Activated naive CD4-positive, alpha-beta T cell treated with anti-CD3 and anti-CD28 coated beads for 36 hours (primary cell): ENCODE measurements at regions of chr4 and their contacts with region 1.

Region 1: GRCh38 chr4:6873792-6874461 is 35.7 kb upstream of the TBC1D14 start:
- DNase-seq: peak; percentile 91
- H3K4me3 Mint-ChIP-seq: no peak overlapping the region
- H3K27ac Mint-ChIP-seq: no peak overlapping the region
- H3K4me1 Mint-ChIP-seq: peaks cover 2% of the 10 kb centered on the region
- H3K27me3 Mint-ChIP-seq: no peaks in the 10 kb centered on the region

Region 2: GRCh38 chr4:6574747-6575502 is 299.0 kb before region 1 on chr4 and contains the start of gene MAN2B2:
- CTCF ChIA-PET with region 1: no interaction called
- intact Hi-C with region 1: loop called (anchors 10 kb)
- DNase-seq: peak; percentile 83
- H3K4me3 Mint-ChIP-seq: peak within 1 kb of the TSS; percentile 84
- H3K27ac Mint-ChIP-seq: peak within 1 kb of the TSS; percentile 60
- H3K4me1 Mint-ChIP-seq: peaks cover 4% of the 10 kb centered on the region
- H3K27me3 Mint-ChIP-seq: no peaks in the 10 kb centered on the region
- total RNA-seq, gene MAN2B2: 12.7 to 12.8 TPM

Region 3: DNA sequence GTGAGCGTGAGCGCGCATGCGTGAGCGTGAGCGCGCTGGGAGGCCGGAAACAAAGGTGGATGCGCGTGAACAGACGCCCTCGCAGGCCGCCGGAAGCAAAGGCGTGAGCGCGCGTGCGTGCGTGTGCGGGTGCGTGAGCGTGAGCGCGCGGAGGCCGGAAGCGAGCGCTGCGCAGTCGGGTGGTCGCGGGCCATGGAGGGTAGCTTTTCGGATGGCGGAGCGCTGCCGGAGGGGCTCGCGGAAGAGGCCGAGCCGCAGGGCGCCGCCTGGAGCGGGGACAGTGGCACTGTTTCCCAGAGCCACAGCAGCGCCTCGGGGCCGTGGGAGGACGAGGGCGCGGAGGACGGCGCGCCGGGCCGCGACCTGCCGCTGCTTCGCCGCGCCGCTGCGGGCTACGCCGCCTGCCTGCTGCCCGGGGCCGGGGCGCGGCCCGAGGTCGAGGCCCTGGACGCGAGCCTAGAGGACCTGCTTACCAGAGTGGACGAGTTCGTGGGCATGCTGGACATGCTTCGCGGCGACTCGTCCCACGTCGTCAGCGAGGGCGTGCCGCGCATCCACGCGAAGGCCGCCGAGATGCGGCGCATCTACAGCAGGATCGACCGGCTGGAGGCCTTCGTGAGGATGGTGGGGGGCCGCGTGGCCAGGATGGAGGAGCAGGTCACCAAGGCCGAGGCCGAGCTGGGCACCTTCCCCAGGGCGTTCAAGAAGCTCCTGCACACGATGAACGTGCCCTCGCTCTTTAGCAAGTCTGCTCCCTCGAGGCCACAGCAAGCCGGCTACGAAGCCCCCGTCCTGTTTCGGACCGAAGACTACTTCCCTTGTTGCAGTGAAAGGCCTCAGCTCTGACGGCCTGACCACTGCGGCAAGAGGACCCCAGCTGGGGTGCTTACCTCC is 157.7 kb before region 1 on chr4 and contains the start of gene BLOC1S4:
- CTCF ChIA-PET with region 1: interaction called, 179 read pairs
- intact Hi-C with region 1: loop called (anchors 1 kb)
- DNase-seq: peak; percentile 88
- H3K4me3 Mint-ChIP-seq: peak within 1 kb of the TSS; percentile 96
- H3K27ac Mint-ChIP-seq: peak within 1 kb of the TSS; percentile 95
- H3K4me1 Mint-ChIP-seq: peaks cover 26% of the 10 kb centered on the region
- H3K27me3 Mint-ChIP-seq: no peaks in the 10 kb centered on the region
- total RNA-seq, gene BLOC1S4: 11.0 to 11.8 TPM

Region 4: DNA sequence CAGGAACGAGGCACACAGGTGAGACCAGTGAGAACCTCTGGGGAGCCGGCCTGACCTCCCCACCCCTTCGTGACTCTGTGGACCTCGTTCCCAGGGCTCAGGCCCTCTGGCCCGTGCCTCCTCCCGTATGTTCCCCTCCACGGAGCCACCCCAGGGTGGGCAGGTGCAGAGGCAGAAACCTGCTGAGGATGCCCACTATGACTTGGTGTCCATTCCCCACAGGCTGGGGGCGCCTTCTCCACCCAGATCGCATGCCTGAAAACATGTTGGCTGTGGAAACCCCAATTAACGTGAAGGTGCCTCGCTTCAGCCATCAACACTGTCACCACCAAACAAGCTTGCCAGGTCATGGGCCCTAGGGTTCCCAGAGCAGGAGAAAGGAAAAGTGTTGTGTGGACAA is 130.9 kb before region 1 on chr4:
- CTCF ChIA-PET with region 1: interaction called, 5 read pairs
- intact Hi-C with region 1: loop called (anchors 1 kb)
- DNase-seq: no peak
- H3K4me3 Mint-ChIP-seq: no peak overlapping the region
- H3K27ac Mint-ChIP-seq: no peak overlapping the region
- H3K4me1 Mint-ChIP-seq: peaks cover 7% of the 10 kb centered on the region
- H3K27me3 Mint-ChIP-seq: no peaks in the 10 kb centered on the region

Region 5: DNA sequence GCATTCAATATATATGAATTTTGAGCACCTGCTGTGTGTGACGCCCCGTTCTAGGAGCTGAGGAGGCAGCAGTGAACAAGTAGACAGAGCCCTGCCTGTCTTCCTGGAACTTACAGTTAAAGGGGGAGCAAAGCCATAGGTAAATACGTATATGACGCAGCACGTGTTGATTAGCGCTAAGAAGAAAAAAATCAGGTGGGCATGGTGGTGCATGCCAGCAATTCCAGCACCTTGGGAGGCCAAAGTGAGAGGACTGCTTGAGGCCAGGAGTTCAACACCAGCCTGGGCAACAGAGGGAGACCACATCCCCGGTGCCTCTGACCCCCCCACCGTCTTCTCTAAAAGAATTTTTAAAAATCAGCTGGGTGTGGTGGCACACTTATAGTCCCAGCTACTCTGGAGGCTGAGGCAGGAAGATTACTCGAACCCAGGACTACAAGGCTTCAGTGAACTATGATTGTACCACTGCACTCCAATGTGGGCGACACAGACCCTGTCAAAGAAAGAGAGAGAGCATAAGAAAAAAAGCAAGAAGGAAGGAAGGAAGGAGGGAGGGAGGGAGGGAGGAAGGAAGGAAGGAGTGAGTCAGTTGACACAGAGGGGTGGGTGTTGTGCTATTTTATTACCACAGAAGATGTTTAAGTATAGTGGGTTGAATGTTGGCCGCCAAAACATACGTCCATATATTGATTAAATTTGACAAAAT is 96.8 kb before region 1 on chr4:
- CTCF ChIA-PET with region 1: interaction called, 19 read pairs
- intact Hi-C with region 1: no loop called
- DNase-seq: peak; percentile 19
- H3K4me3 Mint-ChIP-seq: no peak overlapping the region
- H3K27ac Mint-ChIP-seq: peak overlapping the region; percentile 79
- H3K4me1 Mint-ChIP-seq: peaks cover 38% of the 10 kb centered on the region
- H3K27me3 Mint-ChIP-seq: no peaks in the 10 kb centered on the region

Region 6: DNA sequence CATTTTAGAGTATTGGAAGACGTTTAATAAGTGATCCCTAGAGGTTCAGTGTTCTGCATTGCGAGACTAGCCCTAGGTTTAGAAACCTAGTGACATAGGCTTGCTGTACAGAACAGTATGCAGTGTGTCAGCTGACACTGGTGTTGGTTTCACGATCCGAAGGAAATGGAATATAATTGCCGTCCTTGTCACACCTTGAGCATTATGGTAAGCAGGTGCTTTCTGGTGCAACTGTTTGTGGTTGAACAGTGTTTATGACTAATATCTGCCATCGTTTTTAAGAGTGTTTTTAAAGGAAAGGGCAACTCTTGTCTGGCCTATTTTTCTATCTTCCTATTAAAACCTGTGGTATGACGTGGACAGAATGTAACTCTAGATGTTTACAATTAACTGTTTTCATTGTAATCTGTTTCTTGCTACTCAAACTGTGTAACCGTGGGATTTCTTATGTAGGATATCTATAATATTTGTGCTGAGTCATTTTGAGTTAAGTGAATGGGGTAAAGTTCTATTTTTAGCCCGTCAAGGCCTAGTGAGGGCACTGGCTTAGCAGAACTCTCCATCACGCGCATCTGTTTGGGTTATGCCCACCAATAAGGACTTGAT is 18.1 kb before region 1 on chr4:
- CTCF ChIA-PET with region 1: interaction called, 30 read pairs
- intact Hi-C with region 1: no loop called
- DNase-seq: peak; percentile 65
- H3K4me3 Mint-ChIP-seq: no peak overlapping the region
- H3K27ac Mint-ChIP-seq: peak overlapping the region; percentile 85
- H3K4me1 Mint-ChIP-seq: peaks cover 25% of the 10 kb centered on the region
- H3K27me3 Mint-ChIP-seq: no peaks in the 10 kb centered on the region

Region 7: DNA sequence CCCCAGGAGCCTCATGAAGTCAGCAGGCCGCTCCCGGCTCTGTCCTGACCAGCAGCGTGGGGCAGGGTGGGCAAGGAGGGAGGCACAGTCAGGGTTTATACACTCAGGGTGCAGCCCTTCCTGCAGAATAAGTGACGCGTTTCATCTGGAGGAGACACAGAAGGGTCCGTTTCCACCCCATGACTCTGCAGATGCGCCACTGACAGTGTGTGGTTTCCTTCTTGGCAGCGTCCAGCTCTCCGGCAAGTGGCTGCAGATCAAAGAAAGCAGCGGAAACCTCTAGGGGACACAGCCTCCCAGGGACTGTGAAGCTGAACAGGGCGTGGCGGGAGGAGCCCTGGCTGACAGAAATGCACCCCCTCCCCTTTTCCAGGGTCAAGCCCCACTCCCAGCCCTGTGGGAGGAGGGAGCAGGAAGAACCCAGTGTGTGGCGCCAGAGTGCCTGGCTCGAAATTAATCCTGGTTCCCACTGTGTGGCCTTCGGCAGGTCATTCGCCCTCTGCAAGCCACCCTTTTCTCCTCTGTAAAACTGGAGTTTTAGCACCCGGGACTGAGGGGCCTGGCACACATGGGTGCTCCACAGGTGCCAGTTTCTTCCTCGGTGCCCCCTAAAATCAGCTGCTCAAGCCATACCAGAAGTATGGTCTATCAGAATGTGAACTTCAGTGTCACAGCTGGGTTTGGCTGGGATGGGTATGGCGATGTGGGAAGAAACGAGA is 18.4 kb after region 1 on chr4:
- CTCF ChIA-PET with region 1: interaction called, 22 read pairs
- intact Hi-C with region 1: no loop called
- DNase-seq: peak; percentile 55
- H3K4me3 Mint-ChIP-seq: no peak overlapping the region
- H3K27ac Mint-ChIP-seq: no peak overlapping the region
- H3K4me1 Mint-ChIP-seq: peaks cover 17% of the 10 kb centered on the region
- H3K27me3 Mint-ChIP-seq: no peaks in the 10 kb centered on the region